HepG2 (cell line): ENCODE measurements at regions of chr21 and their contacts with region 1.

Region 1: DNA sequence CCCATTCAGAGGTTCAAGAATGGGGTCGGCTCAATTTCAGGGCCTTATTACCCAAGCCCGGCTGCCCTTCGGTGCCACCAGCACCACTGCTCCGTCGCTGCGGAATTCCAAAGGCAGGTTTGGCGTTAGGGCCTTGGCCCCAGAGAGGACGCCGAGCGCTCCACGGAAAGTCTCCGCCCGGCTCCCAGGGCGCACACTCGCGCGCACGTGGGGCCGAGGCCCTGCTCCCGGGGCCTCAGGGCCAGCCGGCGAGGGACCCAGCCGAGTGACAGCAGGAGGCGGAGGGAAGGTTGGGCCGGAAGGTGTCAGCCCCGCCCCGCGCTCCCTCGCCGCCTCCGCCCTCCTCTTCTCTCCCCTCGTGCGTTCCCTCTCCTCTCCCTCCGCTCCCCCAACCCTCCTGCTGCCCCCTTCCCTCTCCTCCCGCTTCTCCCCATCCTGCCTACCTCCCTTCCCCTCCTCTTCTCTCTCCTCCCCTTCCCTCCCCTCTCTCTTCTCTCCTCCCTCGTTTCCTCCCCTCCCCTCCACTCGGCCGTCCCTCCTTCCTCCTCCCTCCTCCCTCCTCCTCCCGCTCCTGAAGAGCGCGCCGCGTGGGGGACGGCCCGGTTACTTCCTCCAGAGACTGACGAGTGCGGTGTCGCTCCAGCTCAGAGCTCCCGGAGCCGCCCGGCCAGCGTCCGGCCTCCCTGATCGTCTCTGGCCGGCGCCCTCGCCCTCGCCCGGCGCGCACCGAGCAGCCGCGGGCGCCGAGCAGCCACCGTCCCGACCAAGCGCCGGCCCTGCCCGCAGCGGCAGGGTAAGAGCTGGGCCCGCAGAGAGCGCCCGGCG is at the start of gene ETS2:
- DNase-seq: peak; percentile 84
- ATAC-seq: peak; percentile 86
- H3K4me3 ChIP-seq: peak within 1 kb of the TSS; percentile 88 to 98 (median 96)
- H3K27ac ChIP-seq: peak within 1 kb of the TSS; percentile 75
- H3K4me1 ChIP-seq: peaks cover 78% of the 10 kb centered on the region
- H3K27me3 ChIP-seq: no peaks in the 10 kb centered on the region; a peak in 1 of 5 replicates
- CTCF ChIP-seq: peak; percentile 24; the same call in 1 of the 2 replicates
- EP300 ChIP-seq: no peak
- POLR2A ChIP-seq: peak; percentile 78 to 95
- RAD21 ChIP-seq: peak; percentile 26; the same call in 1 of the 2 replicates
- total RNA-seq, gene ETS2: 24.6 and 28.2 TPM in 2 replicates

Region 2: DNA sequence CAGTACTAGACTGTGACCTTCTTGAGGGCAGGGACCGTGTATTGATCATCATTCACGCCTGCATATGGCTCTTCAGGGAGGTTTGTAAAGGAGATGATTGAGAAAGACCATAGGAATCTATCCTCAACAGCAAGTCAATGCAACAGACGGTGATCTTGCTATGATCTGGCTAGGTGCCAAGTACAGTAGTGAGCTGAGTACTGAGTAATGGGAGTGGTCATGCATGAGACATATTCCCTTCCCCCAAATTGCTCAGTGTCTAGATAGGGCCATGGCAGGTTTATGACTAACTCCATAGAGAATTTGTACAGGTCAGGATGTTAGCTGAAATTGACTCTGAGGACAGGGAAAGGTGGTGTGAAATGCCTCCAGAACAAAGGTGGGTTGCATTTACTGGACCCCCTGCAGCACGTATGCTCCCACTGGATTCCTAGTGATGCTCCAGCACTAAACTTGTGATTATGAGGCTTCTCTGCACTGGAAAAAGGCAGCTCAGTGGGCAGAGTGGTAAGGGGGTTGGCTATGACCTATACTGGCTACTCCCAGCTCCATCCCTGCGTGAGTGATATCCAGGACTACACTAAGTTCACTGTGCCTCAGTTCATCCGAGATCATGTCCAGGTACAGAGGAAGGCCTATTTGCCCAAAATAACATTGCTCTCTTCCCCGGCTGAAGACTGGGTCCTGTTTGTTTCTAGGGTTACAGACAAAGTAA is 926.4 kb before region 1 on chr21:
- CTCF ChIA-PET with region 1: no interaction called
- POLR2A ChIA-PET with region 1: no interaction called
- in situ Hi-C with region 1: no loop called
- intact Hi-C with region 1: no loop called
- DNase-seq: no peak
- ATAC-seq: no peak
- H3K4me3 ChIP-seq: no peak overlapping the region
- H3K27ac ChIP-seq: no peak overlapping the region
- H3K4me1 ChIP-seq: no peaks in the 10 kb centered on the region
- H3K27me3 ChIP-seq: no peaks in the 10 kb centered on the region; a peak in 1 of 5 replicates
- CTCF ChIP-seq: no peak
- EP300 ChIP-seq: no peak
- POLR2A ChIP-seq: no peak
- RAD21 ChIP-seq: no peak

Region 3: DNA sequence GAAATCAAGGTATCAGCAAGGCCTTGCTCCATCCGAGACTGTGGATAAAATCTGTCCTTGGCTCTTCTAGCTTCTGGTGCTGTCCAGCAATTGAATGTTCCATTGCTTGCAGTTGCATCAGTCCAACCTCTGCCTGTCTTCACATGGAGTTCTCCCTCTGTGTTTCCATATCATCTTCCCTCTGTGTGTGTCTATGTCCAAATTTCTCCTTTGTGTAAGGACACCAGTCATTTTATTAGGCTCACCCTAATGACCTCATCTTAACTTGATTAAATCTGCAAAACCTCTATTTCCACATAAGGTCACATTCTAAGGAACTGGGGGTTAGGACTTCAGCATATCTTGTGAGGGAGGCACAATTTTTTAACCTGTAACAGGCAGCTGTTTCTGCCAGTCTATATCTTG is 391.5 kb before region 1 on chr21:
- CTCF ChIA-PET with region 1: no interaction called
- POLR2A ChIA-PET with region 1: no interaction called
- in situ Hi-C with region 1: no loop called
- intact Hi-C with region 1: no loop called
- DNase-seq: no peak
- ATAC-seq: no peak
- H3K4me3 ChIP-seq: no peak overlapping the region
- H3K27ac ChIP-seq: no peak overlapping the region
- H3K4me1 ChIP-seq: no peaks in the 10 kb centered on the region
- H3K27me3 ChIP-seq: no peaks in the 10 kb centered on the region; a peak in 1 of 5 replicates
- CTCF ChIP-seq: no peak
- EP300 ChIP-seq: no peak
- POLR2A ChIP-seq: no peak
- RAD21 ChIP-seq: no peak

Region 4: GRCh38 chr21:38766987-38767722 is 38.4 kb before region 1 on chr21:
- CTCF ChIA-PET with region 1: no interaction called
- POLR2A ChIA-PET with region 1: no interaction called
- in situ Hi-C with region 1: no loop called
- intact Hi-C with region 1: loop called (anchors 2 kb)
- DNase-seq: peak; percentile 20
- ATAC-seq: peak; percentile 94
- H3K4me3 ChIP-seq: peak overlapping the region; percentile 60 to 71 (median 64)
- H3K27ac ChIP-seq: no peak overlapping the region
- H3K4me1 ChIP-seq: peaks cover 24% of the 10 kb centered on the region
- H3K27me3 ChIP-seq: peaks cover 0 to 16% of the 10 kb centered on the region in 2 experiments; a peak in 3 of 5 replicates
- CTCF ChIP-seq: no peak
- EP300 ChIP-seq: no peak
- POLR2A ChIP-seq: no peak
- RAD21 ChIP-seq: no peak

Region 5: DNA sequence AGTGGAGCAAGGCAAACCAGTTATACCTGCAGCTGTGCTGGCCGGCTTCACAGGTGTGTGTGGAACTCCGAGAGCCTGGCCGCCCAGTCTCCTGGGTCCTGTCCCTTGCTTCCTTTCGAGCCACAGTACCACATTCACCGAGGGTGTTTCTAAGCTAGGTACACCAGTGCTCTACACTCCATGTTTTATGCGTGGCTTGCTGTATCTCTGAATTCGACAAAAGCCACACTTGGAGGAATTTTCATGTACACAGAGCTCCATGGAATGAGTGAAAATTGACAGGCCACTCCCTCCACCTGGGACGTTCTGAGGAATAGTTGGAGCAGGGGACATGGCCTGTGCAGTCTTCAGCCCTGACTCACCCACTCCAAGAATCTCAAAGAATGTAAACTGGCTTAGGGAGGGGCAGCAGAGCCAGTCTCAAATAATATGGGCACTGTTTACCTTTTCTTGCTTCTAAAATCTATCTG is 14.2 kb after region 1 on chr21:
- CTCF ChIA-PET with region 1: no interaction called
- POLR2A ChIA-PET with region 1: interaction called, 21 read pairs
- in situ Hi-C with region 1: no loop called
- intact Hi-C with region 1: no loop called
- DNase-seq: no peak
- ATAC-seq: no peak
- H3K4me3 ChIP-seq: no peak overlapping the region
- H3K27ac ChIP-seq: no peak overlapping the region
- H3K4me1 ChIP-seq: peaks cover 65% of the 10 kb centered on the region
- H3K27me3 ChIP-seq: no peaks in the 10 kb centered on the region
- CTCF ChIP-seq: no peak
- EP300 ChIP-seq: no peak
- POLR2A ChIP-seq: peak in 1 of 2 experiments; percentile 34; a peak in 1 of 4 replicates
- RAD21 ChIP-seq: no peak

Region 6: GRCh38 chr21:38837806-38838461 is 32.4 kb after region 1 on chr21:
- CTCF ChIA-PET with region 1: no interaction called
- POLR2A ChIA-PET with region 1: no interaction called
- in situ Hi-C with region 1: no loop called
- intact Hi-C with region 1: no loop called
- DNase-seq: no peak
- ATAC-seq: no peak
- H3K4me3 ChIP-seq: no peak overlapping the region
- H3K27ac ChIP-seq: no peak overlapping the region
- H3K4me1 ChIP-seq: peaks cover 50% of the 10 kb centered on the region
- H3K27me3 ChIP-seq: no peaks in the 10 kb centered on the region
- CTCF ChIP-seq: no peak
- EP300 ChIP-seq: no peak
- POLR2A ChIP-seq: no peak
- RAD21 ChIP-seq: no peak

Region 7: DNA sequence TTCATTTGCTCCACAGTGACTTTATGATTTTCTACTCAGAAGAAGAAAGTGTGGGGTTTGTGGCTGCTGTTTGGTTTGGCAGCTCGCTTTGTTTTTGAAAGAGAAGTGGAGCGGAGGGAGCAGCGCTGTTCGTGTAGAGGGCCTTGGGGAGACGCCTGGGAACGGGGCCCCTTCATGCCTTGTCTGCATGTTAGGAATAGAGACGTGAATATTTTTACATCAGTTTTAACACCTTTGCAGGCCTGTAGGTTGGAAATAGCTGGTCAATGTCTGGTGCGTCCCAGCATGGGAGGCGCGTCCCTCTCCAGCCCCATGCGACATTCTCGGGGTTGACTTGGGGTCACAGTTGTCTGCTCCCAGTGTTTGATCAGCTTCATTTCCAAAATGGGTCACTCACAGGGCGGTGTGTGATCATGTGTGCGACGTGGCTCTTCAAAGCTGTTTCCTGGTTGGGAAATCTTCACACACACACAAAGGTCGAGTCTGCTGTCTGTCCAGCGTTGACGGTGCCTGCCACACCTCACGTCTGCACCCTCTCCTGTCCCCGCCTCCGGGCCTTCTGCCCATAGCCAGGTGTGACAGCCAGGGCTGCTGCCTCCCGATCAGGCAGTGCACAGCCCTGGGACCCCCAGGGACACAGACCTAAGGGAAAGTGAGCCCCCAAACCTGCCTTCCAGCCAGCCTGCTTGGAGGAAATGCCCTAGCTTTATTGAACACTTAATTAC is 228.5 kb after region 1 on chr21:
- CTCF ChIA-PET with region 1: no interaction called
- POLR2A ChIA-PET with region 1: interaction called, 3 read pairs
- in situ Hi-C with region 1: no loop called
- intact Hi-C with region 1: loop called (anchors 5 kb)
- DNase-seq: peak; percentile 98
- ATAC-seq: peak; percentile 99
- H3K4me3 ChIP-seq: no peak overlapping the region; a peak in 1 of 6 replicates
- H3K27ac ChIP-seq: peak overlapping the region; percentile 72
- H3K4me1 ChIP-seq: peaks cover 88% of the 10 kb centered on the region
- H3K27me3 ChIP-seq: no peaks in the 10 kb centered on the region
- CTCF ChIP-seq: peak; percentile 71
- EP300 ChIP-seq: peak; percentile 67 to 98; a peak in 3 of 4 replicates
- POLR2A ChIP-seq: peak; percentile 34 to 47; a peak in 2 of 4 replicates
- RAD21 ChIP-seq: peak; percentile 33; the same call in 1 of the 2 replicates

Region 8: GRCh38 chr21:39137248-39138178 is 332.0 kb after region 1 on chr21:
- CTCF ChIA-PET with region 1: no interaction called
- POLR2A ChIA-PET with region 1: no interaction called
- in situ Hi-C with region 1: no loop called
- intact Hi-C with region 1: loop called (anchors 10 kb)
- DNase-seq: peak; percentile 43
- ATAC-seq: peak; percentile 67
- H3K4me3 ChIP-seq: no peak overlapping the region
- H3K27ac ChIP-seq: no peak overlapping the region
- H3K4me1 ChIP-seq: peaks cover 51% of the 10 kb centered on the region
- H3K27me3 ChIP-seq: peaks cover 0 to 16% of the 10 kb centered on the region in 2 experiments; a peak in 1 of 5 replicates
- CTCF ChIP-seq: peak; percentile 47
- EP300 ChIP-seq: no peak
- POLR2A ChIP-seq: no peak
- RAD21 ChIP-seq: no peak